ENCODE measurements at regions of chr3 and their contacts with region 1.

Region 1: DNA sequence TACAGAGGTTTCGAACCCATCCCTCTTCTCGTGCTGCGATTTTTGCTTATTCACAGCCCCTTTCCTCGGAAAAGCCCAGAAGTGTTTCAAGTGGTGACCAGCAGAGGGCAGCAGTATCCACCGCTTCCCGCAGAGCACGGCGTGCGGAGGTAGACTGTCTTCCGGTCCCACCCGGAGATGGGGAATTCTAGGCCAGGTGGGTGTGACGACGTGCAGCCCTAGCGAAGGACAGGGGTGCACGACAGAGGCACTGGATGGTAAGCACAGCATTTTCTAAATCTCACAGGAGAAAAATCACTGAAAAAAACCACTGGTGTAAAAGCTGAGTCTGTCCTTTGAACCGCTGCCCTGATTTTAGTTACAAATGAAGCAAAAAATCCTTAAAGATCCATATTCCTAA is 7.4 kb upstream of the PSMD6 start:
- DNase-seq: peak; percentile 71 to 76 (median 72)
- ATAC-seq: peak; percentile 96 to 99 (median 98)
- H3K4me3 ChIP-seq: peak overlapping the region in 1 of 3 donors; percentile 33
- H3K27ac ChIP-seq: no peak overlapping the region
- H3K4me1 ChIP-seq: peaks cover 0 to 6% (median 1%) of the 10 kb centered on the region in 4 donors
- H3K27me3 ChIP-seq: no peaks in the 10 kb centered on the region
- CTCF ChIP-seq: peak; percentile 85 to 89 (median 86)
- POLR2A ChIP-seq: no peak

Region 2: GRCh38 chr3:64399205-64399800 is 368.6 kb after region 1 on chr3:
- intact Hi-C with region 1: loop called (anchors 5 to 10 kb)
- DNase-seq: peak in 1 of 3 donors; percentile 51
- ATAC-seq: peak; percentile 82 to 94 (median 88)
- H3K4me3 ChIP-seq: no peak overlapping the region
- H3K27ac ChIP-seq: no peak overlapping the region
- H3K4me1 ChIP-seq: no peaks in the 10 kb centered on the region
- H3K27me3 ChIP-seq: no peaks in the 10 kb centered on the region
- CTCF ChIP-seq: peak; percentile 63 to 82 (median 72)
- POLR2A ChIP-seq: no peak

Region 3: GRCh38 chr3:64484289-64484992 is 453.7 kb after region 1 on chr3:
- intact Hi-C with region 1: loop called (anchors 5 kb)
- DNase-seq: peak; percentile 74 to 78 (median 75)
- ATAC-seq: peak; percentile 98 to 100 (median 99)
- H3K4me3 ChIP-seq: no peak overlapping the region
- H3K27ac ChIP-seq: no peak overlapping the region
- H3K4me1 ChIP-seq: no peaks in the 10 kb centered on the region
- H3K27me3 ChIP-seq: no peaks in the 10 kb centered on the region
- CTCF ChIP-seq: peak; percentile 87 to 94 (median 91)
- POLR2A ChIP-seq: no peak

Region 4: DNA sequence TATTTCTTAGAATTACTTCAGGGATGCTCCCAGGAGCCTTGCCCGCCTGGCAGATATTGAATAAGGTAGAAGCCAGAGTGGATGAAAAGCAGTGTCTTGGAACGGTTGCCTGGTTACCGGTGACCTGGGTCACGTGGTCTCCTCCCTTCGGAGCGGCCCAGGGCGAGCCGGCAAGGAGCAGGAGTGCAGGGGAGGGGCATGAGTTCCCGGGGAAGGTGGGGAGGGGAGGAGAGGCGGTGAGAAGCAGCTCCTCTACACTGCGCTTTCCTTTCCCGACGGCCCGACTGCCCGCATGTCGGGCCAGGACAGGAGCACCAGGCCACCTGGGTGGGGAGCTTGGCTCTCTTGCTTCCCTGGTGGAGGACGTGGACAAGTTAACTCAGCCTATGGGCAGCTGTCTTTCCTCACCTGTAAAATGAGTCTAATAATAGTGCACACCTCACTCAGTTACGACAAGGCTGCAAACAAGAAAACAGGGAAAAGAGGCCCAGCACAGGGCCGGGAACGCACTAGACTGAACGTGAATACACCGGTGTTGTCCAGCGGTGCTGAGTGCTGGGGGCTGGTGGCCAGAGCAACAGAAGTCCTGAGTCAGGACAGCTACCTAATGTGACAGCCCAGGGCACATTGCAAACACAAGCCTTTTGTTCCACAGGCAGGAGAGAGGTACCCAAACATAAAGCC is 458.8 kb after region 1 on chr3:
- intact Hi-C with region 1: loop called (anchors 5 kb)
- DNase-seq: no peak
- ATAC-seq: no peak
- H3K4me3 ChIP-seq: no peak overlapping the region
- H3K27ac ChIP-seq: no peak overlapping the region
- H3K4me1 ChIP-seq: no peaks in the 10 kb centered on the region
- H3K27me3 ChIP-seq: no peaks in the 10 kb centered on the region
- CTCF ChIP-seq: no peak
- POLR2A ChIP-seq: no peak